ENCODE measurements at regions of chrX and their contacts with region 1.

Region 1: GRCh38 chrX:53317365-53318069 is 36.1 kb upstream of the IQSEC2 start:
- DNase-seq: no peak
- ATAC-seq: peak; percentile 95
- H3K4me3 ChIP-seq: no peak overlapping the region
- H3K27ac ChIP-seq: no peak overlapping the region
- H3K4me1 ChIP-seq: peaks cover 3% of the 10 kb centered on the region; the same call in 1 of the 2 replicates
- H3K27me3 ChIP-seq: peaks cover 15% of the 10 kb centered on the region in 2 experiments
- CTCF ChIP-seq: peak; percentile 83 to 90 (median 87)
- EP300 ChIP-seq: no peak
- POLR2A ChIP-seq: no peak
- RAD21 ChIP-seq: peak; percentile 70

Region 2: DNA sequence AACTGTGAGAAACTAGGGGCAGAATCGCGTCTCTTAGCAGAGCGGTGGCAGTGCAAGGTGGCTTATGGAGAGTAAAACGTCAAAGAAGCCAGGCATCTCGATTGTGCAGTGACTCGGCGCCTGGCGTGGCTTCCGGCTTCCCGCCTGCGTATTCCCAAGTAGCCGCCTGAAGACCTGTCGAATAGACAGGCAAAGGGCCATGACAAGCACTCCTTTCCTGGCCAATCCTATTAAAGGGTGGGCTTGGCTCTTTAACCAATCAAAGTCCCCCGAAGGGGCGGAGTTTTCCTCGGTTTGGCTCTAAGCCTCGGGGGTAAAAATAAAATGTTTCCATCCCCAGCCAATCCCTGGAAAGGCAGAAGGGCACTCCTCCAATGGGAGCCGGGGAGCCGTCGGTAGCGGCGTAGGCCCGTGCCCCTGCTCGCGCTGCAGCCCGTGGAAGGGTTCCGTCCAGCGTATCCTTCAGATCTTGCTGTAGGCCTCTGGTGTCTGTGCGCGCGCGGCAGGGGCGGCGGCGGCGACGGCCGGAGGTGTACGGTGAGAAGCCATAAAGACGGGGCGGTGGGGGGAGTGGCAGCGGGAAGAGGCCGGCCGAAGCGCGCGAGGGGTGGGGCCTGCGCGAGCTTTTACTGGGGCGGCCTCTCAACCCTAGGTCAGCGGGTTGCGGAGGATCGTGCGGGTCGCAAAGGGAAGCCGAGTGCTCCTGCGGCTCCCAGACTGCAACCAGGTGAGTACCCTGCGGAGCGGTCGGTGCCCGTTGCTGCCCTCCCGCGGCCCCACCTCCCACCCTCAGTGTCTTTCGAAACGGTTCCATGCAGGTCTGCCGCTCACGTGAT is 223.6 kb before region 1 on chrX and contains the start of gene KANTR:
- CTCF ChIA-PET with region 1: no interaction called
- POLR2A ChIA-PET with region 1: no interaction called
- RAD21 ChIA-PET with region 1: no interaction called
- SMC1A ChIA-PET with region 1: no interaction called
- in situ Hi-C with region 1: no loop called
- intact Hi-C with region 1: no loop called
- DNase-seq: peak; percentile 73
- ATAC-seq: peak; percentile 92
- H3K4me3 ChIP-seq: peak within 1 kb of the TSS; percentile 71
- H3K27ac ChIP-seq: peak within 1 kb of the TSS; percentile 45
- H3K4me1 ChIP-seq: no peaks in the 10 kb centered on the region
- H3K27me3 ChIP-seq: no peaks in the 10 kb centered on the region
- CTCF ChIP-seq: no peak
- EP300 ChIP-seq: no peak
- POLR2A ChIP-seq: peak; percentile 65
- RAD21 ChIP-seq: no peak
- polyA plus RNA-seq, gene KANTR: 1.00 to 1.1 TPM

Region 3: DNA sequence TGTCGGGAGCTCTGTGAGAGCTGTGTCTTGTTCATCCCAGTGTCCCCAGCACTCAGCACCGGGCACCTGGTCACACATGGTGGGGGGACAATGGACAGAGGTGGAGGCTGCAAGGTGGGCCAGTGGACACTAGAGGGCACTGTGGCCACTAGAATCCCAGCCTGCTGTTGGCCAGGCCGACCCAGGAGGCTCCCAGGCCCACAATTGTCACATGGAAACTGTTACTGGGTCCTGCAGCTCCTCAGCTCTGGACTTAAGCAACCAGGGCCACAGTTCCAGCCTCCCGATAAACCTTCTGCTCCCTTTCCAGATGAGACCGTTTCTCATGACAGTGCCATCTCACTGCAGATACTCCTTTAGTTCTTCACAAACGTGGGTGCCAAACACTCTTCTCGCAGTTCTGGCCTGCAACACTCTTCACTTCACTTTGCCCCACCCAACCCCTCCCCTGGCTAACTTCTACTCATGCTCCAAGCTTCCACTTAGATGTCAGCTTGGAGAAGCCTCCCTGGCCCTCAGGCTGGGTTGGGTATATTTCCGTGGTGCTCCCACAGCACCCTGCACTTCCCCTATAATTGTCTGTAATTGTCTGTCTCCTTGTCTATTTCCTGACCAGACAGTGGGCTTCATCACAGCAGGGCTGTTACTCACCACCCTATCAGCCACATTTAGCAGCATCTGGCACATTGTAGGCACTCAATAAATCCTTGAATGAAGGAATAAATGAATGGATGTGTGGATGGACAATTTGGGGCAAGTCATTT is 32.7 kb before region 1 on chrX:
- CTCF ChIA-PET with region 1: interaction called, 61 read pairs
- POLR2A ChIA-PET with region 1: no interaction called
- RAD21 ChIA-PET with region 1: interaction called, 8 read pairs
- SMC1A ChIA-PET with region 1: interaction called, 6 read pairs
- in situ Hi-C with region 1: no loop called
- intact Hi-C with region 1: no loop called
- DNase-seq: peak; percentile 8
- ATAC-seq: peak; percentile 90
- H3K4me3 ChIP-seq: no peak overlapping the region
- H3K27ac ChIP-seq: no peak overlapping the region
- H3K4me1 ChIP-seq: no peaks in the 10 kb centered on the region; the same call in 1 of the 2 replicates
- H3K27me3 ChIP-seq: peaks cover 0 to 2% of the 10 kb centered on the region in 2 experiments; a peak in 1 of 4 replicates
- CTCF ChIP-seq: peak; percentile 77 to 91 (median 89)
- EP300 ChIP-seq: no peak
- POLR2A ChIP-seq: no peak
- RAD21 ChIP-seq: peak; percentile 38; the same call in 1 of the 2 replicates

Region 4: GRCh38 chrX:53330331-53330730 is 12.8 kb after region 1 on chrX:
- CTCF ChIA-PET with region 1: interaction called, 66 read pairs
- POLR2A ChIA-PET with region 1: no interaction called
- RAD21 ChIA-PET with region 1: interaction called, 5 read pairs
- SMC1A ChIA-PET with region 1: interaction called, 5 read pairs
- in situ Hi-C with region 1: no loop called
- intact Hi-C with region 1: no loop called
- DNase-seq: no peak
- ATAC-seq: no peak
- H3K4me3 ChIP-seq: no peak overlapping the region
- H3K27ac ChIP-seq: no peak overlapping the region
- H3K4me1 ChIP-seq: no peaks in the 10 kb centered on the region
- H3K27me3 ChIP-seq: peaks cover 0 to 2% of the 10 kb centered on the region in 2 experiments; a peak in 2 of 4 replicates
- CTCF ChIP-seq: no peak
- EP300 ChIP-seq: no peak
- POLR2A ChIP-seq: no peak
- RAD21 ChIP-seq: no peak

Region 5: GRCh38 chrX:53433651-53434639 is 116.4 kb after region 1 on chrX and contains the start of gene HSD17B10:
- CTCF ChIA-PET with region 1: interaction called, 122 read pairs
- POLR2A ChIA-PET with region 1: no interaction called
- RAD21 ChIA-PET with region 1: interaction called, 21 read pairs
- SMC1A ChIA-PET with region 1: interaction called, 22 read pairs
- in situ Hi-C with region 1: loop called (anchors 5 kb)
- intact Hi-C with region 1: loop called (anchors 1 kb)
- DNase-seq: peak; percentile 56
- ATAC-seq: peak; percentile 99
- H3K4me3 ChIP-seq: peak within 1 kb of the TSS; percentile 81
- H3K27ac ChIP-seq: peak within 1 kb of the TSS; percentile 61
- H3K4me1 ChIP-seq: peaks cover 2% of the 10 kb centered on the region; the same call in 1 of the 2 replicates
- H3K27me3 ChIP-seq: no peaks in the 10 kb centered on the region
- CTCF ChIP-seq: no peak
- EP300 ChIP-seq: no peak
- POLR2A ChIP-seq: peak; percentile 86
- RAD21 ChIP-seq: no peak
- polyA plus RNA-seq, gene HSD17B10: 43.7 to 114 TPM

Region 6: GRCh38 chrX:53481816-53482465 is 164.4 kb after region 1 on chrX:
- CTCF ChIA-PET with region 1: interaction called, 58 read pairs
- POLR2A ChIA-PET with region 1: no interaction called
- RAD21 ChIA-PET with region 1: interaction called, 24 read pairs
- SMC1A ChIA-PET with region 1: interaction called, 17 read pairs
- in situ Hi-C with region 1: no loop called
- intact Hi-C with region 1: loop called (anchors 1 kb)
- DNase-seq: no peak
- ATAC-seq: peak; percentile 89
- H3K4me3 ChIP-seq: no peak overlapping the region
- H3K27ac ChIP-seq: no peak overlapping the region
- H3K4me1 ChIP-seq: no peaks in the 10 kb centered on the region
- H3K27me3 ChIP-seq: no peaks in the 10 kb centered on the region
- CTCF ChIP-seq: peak; percentile 66 to 82 (median 78)
- EP300 ChIP-seq: no peak
- POLR2A ChIP-seq: no peak
- RAD21 ChIP-seq: peak; percentile 59

Region 7: DNA sequence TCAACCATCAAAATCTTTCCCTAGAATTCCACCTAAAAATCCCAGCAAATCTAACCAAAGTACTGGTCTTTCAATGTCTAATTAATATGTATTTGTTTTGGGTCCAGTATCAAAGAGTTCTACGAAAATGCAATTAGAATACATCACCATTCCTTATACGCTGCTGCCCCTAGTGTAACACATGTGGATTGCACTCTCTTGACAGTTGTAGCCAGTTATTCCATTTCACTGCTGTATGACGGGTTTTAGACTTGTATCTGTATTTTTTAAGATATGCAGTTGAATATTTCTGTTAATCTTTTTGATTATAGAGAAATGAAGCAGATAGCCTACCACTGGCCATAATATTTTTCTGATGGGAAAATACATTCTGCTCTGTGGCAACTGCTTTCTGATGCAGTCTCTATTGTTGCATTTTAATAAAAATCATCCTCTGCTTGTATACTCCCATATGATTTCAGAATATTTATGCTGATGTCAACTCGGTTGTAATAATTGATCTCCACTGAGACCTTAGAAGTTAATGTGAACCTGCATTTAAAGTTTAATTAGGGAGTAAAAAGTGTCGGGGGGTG is 1740.2 kb after region 1 on chrX:
- CTCF ChIA-PET with region 1: interaction called, 3 read pairs
- POLR2A ChIA-PET with region 1: no interaction called
- RAD21 ChIA-PET with region 1: no interaction called
- SMC1A ChIA-PET with region 1: no interaction called
- in situ Hi-C with region 1: no loop called
- intact Hi-C with region 1: loop called (anchors 10 kb)
- DNase-seq: no peak
- ATAC-seq: peak; percentile 83
- H3K4me3 ChIP-seq: no peak overlapping the region
- H3K27ac ChIP-seq: no peak overlapping the region
- H3K4me1 ChIP-seq: no peaks in the 10 kb centered on the region
- H3K27me3 ChIP-seq: no peaks in the 10 kb centered on the region
- CTCF ChIP-seq: peak; percentile 76 to 84 (median 76)
- EP300 ChIP-seq: no peak
- POLR2A ChIP-seq: no peak
- RAD21 ChIP-seq: peak; percentile 84

Measured in GM12878 (cell line).